Heart right ventricle (tissue), 16 donors: ENCODE measurements at regions of chr5 and their contacts with region 1.

Region 1: GRCh38 chr5:156340893-156341292 is 13.9 kb downstream of the SGCD start:
- DNase-seq: no peak
- ATAC-seq: no peak
- H3K4me3 ChIP-seq: no peak overlapping the region
- H3K27ac ChIP-seq: no peak overlapping the region
- H3K4me1 ChIP-seq: no peaks in the 10 kb centered on the region
- H3K27me3 ChIP-seq: no peaks in the 10 kb centered on the region
- CTCF ChIP-seq: no peak

Region 2: GRCh38 chr5:155943516-155944407 is 397.1 kb before region 1 on chr5:
- intact Hi-C with region 1: loop called in 1 of 10 experiments (anchors 5 kb)
- DNase-seq: peak; percentile 27 to 31
- ATAC-seq: peak in 7 of 8 donors; percentile 65 to 89 (median 75)
- H3K4me3 ChIP-seq: no peak overlapping the region
- H3K27ac ChIP-seq: no peak overlapping the region
- H3K4me1 ChIP-seq: peaks cover 0 to 4% (median 0%) of the 10 kb centered on the region in 9 donors
- H3K27me3 ChIP-seq: no peaks in the 10 kb centered on the region
- CTCF ChIP-seq: peak; percentile 31 to 83 (median 72)

Region 3: DNA sequence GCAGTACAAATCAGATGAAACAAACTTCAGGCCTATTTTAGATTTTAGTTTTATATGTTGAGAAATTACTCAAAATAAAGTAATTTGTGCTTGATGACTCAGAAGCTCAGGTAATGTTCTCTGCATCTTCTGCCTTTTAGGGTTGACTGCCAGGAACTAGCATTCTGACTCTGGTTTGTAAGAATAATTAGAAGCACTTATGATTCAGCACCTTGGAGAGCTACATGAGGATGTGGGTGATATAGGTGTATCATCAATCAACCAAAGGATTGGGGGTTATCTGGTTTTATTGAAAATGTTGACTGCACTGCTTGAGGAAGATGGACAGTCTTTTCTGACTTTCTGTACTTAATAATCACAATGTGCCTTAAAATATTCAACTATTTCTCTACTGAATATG is 132.6 kb before region 1 on chr5:
- intact Hi-C with region 1: no loop called
- DNase-seq: no peak
- ATAC-seq: no peak
- H3K4me3 ChIP-seq: no peak overlapping the region
- H3K27ac ChIP-seq: no peak overlapping the region
- H3K4me1 ChIP-seq: no peaks in the 10 kb centered on the region
- H3K27me3 ChIP-seq: no peaks in the 10 kb centered on the region
- CTCF ChIP-seq: no peak

Region 4: DNA sequence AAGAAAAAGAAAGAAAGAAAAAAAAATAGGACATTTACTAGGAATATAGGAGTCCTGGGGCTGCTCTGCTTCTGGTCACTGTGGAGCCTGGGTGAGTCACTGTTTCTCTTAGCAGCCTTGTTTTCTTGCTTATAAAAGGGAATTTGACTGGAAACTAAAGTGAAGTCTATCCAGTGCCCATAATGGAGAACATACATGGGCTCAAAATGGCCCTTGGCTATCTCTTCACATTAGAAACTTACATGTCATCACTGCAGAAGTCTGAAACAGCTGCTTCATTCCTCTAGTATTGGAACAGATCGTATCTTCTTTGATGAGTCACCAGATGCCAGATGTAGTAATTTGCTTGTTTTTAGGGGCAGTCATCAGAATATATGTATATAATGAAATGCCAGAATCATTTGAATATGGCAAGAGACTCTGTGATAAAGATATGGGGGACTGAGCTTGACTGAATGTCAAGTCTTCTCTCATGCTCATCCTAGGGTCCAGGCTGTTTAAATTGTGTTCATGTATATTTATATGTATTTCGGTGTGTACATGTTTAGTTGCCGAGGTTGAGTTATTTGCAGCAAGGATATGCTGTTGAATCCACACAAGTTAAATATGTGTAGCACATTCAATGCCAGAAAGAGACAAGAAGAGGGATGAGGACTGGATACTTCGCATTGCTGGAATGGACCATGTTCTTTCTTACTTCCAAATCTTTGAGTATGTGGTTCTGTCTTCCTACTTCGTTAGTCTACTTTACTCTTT is 42.8 kb after region 1 on chr5:
- intact Hi-C with region 1: no loop called
- DNase-seq: no peak
- ATAC-seq: peak in 6 of 8 donors; percentile 44 to 72 (median 50)
- H3K4me3 ChIP-seq: no peak overlapping the region
- H3K27ac ChIP-seq: peak overlapping the region in 5 of 10 donors; percentile 29 to 48 (median 40)
- H3K4me1 ChIP-seq: peaks cover 0 to 67% (median 21%) of the 10 kb centered on the region in 9 donors
- H3K27me3 ChIP-seq: no peaks in the 10 kb centered on the region
- CTCF ChIP-seq: no peak

Region 5: DNA sequence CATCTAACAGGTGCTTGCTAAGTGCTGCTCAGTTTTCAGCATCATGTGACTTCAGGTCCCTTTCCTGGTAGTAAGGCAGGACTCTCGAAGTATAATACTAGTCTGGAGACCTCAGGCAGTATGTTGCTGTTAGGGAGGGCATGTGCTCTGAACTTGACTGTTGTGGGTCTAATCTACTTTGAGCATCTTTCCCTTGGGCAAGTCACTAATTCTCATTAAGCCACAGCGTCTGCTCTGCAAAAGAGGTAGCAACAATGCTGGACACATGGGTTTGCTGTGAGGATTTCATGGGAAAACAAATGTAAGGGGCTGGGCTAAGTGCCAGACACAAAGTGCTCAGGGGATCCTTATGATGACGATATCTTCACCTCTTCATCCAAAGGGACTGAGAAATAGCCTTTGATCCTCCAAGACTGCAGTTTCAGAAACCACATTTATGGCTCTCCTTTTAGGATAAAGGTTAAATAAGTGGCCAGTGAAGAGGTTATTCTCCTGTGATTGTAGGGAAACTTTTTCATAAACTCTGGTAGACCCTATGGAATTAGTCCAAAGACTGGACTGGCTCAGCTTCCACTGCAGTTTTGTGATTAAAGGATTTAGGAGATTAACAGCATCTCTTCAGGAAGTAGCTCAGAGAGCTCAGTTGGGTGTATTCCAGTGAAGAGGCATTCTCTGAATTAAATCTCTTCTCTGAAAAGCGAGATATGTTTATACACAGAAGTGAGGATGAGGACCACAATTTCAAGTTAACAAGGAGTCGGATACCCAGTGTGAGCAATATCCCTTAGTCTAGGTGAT is 202.7 kb after region 1 on chr5:
- intact Hi-C with region 1: no loop called
- DNase-seq: no peak
- ATAC-seq: no peak
- H3K4me3 ChIP-seq: no peak overlapping the region
- H3K27ac ChIP-seq: no peak overlapping the region
- H3K4me1 ChIP-seq: peaks cover 0 to 14% (median 3%) of the 10 kb centered on the region in 9 donors
- H3K27me3 ChIP-seq: no peaks in the 10 kb centered on the region
- CTCF ChIP-seq: no peak

Region 6: DNA sequence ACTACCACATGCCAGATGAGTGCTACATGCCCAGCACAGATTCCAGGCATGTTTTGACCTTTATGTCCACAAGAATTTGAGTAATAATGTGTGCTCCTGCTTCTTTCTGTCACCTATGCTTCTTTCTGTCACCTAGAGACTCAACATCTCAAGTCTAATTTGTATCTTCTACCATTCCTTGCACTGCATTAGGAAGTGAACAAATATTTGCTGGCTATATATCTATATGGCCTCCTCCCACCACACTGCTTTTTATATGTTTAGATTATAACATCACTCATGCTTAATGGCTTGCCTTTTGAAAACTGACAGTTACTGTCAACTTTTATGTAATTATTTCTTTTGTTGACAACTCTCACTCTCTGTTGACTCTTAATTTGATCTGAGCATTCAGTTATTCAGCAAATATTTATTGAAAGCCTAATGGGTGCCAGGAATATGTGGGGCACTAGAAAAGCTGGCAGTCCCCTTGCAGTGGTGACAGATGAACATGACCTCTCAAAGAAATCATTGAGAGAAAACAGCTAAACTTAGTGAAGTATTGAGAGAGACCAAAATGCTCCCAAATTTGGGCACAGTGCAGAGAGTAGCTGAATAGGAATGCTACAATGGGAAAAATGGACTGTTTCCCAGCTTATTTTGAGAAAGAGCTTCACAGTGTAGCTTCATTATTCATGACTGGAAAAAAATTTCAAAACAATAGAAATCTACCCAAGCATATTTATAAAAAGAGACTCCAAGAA is 243.8 kb after region 1 on chr5:
- intact Hi-C with region 1: no loop called
- DNase-seq: no peak
- ATAC-seq: peak; percentile 21 to 77 (median 48)
- H3K4me3 ChIP-seq: no peak overlapping the region
- H3K27ac ChIP-seq: peak overlapping the region; percentile 11 to 86 (median 76)
- H3K4me1 ChIP-seq: peaks cover 4 to 57% (median 26%) of the 10 kb centered on the region in 9 donors
- H3K27me3 ChIP-seq: no peaks in the 10 kb centered on the region
- CTCF ChIP-seq: no peak